ENCODE measurements at regions of chr16 and their contacts with region 1.

Region 1: GRCh38 chr16:75464130-75464918 is at the start of gene TMEM170A:
- DNase-seq: peak; percentile 89
- H3K4me3 ChIP-seq: peak within 1 kb of the TSS; percentile 74
- H3K27me3 ChIP-seq: no peaks in the 10 kb centered on the region
- CTCF ChIP-seq: peak; percentile 100
- polyA plus RNA-seq, gene TMEM170A: 5.2 and 8.2 TPM in 2 replicates

Region 2: DNA sequence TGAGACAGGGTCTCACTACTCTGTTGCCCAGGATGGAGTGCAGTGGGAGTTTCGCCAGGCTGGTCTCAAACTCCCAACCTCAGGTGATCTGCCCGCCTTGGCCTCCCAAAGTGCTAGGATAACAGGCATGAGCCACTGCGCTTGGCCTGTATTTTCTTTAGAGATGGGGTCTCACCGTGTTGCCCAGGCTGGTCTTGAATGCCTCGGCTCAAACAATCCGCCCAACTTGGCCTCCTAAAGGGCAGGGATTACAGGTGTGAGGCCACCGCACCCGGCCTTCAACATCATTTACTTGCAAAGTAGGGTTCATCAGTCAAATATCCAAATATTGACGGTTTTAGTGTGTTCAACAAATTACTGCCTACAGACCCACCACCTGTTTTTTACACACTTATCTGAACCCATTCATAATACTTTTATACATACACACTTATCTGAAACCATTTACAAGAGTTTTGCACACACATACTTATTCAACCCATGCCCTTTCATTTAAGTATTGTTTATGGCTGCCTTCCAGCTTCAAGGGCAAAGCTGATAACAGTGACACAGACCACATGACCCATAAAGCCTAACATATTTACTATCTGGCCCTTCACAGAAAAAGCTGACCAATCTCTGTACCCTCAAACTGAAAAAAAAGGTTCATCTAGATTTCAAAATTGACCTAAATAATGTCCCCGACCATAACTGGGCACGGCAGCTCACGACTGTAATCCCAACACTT is 11.7 kb before region 1 on chr16:
- CTCF ChIA-PET with region 1: interaction called, 12 read pairs
- POLR2A ChIA-PET with region 1: no interaction called
- DNase-seq: no peak
- H3K4me3 ChIP-seq: no peak overlapping the region
- H3K27me3 ChIP-seq: no peaks in the 10 kb centered on the region
- CTCF ChIP-seq: no peak

Region 3: DNA sequence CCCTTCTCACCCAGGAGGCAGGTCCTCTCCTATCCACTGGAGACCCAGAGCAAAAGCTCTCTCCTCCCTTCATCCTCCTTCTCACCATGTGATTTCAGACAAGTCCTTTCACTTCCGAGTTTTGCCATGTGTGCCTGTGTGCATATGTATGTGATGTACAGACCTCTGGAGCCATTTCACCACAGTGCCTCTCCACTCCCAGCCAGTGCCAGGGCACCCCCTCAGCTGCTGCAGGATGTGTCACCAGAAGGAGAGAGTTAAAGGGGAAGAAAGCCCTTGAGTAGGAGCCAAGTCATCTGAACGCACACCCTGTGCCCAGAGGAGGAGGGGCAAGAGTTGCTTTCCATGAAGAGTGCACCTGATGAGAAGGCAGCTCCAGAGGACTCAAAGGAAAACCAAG is 13.8 kb after region 1 on chr16:
- CTCF ChIA-PET with region 1: interaction called, 11 read pairs
- POLR2A ChIA-PET with region 1: no interaction called
- DNase-seq: no peak
- H3K4me3 ChIP-seq: no peak overlapping the region
- H3K27me3 ChIP-seq: peaks cover 2% of the 10 kb centered on the region; the same call in 1 of the 2 replicates
- CTCF ChIP-seq: no peak

Region 4: DNA sequence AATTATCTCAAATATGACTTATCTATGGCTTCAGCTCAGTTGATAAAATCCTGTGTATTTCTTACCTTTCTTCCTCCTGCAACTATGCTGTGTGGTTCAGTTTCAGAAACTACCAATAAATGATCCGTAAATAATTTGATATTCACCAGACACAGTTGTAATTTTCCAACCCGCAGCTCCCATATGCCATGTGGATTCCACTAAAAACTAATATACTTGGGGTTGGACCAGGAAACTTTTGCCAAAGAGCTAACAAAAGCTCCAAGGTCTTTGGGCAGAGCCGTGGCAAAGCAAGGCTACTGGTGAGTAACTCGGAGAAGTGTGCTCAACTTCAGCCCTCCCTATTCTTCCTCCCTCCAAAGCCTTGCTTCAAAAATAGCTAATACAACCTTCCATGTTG is 33.2 kb after region 1 on chr16:
- CTCF ChIA-PET with region 1: interaction called, 11 read pairs
- POLR2A ChIA-PET with region 1: no interaction called
- DNase-seq: no peak
- H3K4me3 ChIP-seq: no peak overlapping the region
- H3K27me3 ChIP-seq: peaks cover 18% of the 10 kb centered on the region
- CTCF ChIP-seq: no peak

Region 5: GRCh38 chr16:75667503-75667902 is 203.2 kb after region 1 on chr16:
- CTCF ChIA-PET with region 1: no interaction called
- POLR2A ChIA-PET with region 1: no interaction called
- DNase-seq: no peak
- H3K4me3 ChIP-seq: no peak overlapping the region
- H3K27me3 ChIP-seq: no peaks in the 10 kb centered on the region
- CTCF ChIP-seq: no peak

Measured in BJ (cell line).